ENCODE measurements at regions of chr5 and their contacts with region 1.

Region 1: DNA sequence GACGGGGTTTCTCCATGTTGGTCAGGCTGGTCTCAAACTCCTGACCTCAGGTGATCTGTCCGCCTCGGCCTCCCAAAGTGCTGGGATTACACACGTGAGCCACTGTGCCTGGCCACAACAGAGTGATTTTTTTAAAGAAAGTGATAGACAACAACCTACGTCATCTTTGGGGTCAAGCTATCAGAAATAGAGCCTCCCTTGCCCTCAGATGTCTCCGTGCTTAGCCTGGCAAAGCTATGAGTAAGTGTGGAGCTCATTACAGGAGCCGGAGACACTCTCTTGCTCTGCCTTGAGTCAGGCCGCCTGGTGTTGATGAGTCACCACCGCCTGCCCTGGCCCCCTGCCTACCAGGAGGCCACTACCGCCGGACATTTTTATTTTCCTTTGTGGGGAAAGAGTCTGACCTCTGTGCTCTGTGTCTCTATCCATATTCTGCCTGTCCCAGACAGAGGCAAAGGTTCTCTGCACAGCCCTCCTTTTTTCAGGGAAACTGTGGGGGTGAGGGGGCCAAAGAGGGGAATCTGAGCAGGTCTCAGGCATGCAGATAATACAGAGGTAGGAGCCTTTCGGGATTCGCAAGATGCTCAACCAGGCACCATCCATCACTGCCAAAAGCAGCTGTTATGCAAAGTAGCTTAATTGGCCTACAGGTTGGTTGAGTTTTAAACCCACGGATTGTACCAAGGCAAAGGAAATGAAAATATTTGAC is 123.7 kb upstream of the CPEB4 start:
- DNase-seq: peak; percentile 92
- H3K4me3 ChIP-seq: peak overlapping the region in 1 of 3 experiments; percentile 20
- H3K27ac ChIP-seq: peak overlapping the region; percentile 91
- H3K4me1 ChIP-seq: peaks cover 27% of the 10 kb centered on the region
- H3K27me3 ChIP-seq: no peaks in the 10 kb centered on the region
- CTCF ChIP-seq: no peak
- POLR2A ChIP-seq: no peak

Region 2: GRCh38 chr5:173707392-173707791 is 57.1 kb before region 1 on chr5:
- CTCF ChIA-PET with region 1: no interaction called
- POLR2A ChIA-PET with region 1: no interaction called
- dilution Hi-C with region 1: no loop called
- intact Hi-C with region 1: no loop called
- DNase-seq: no peak
- H3K4me3 ChIP-seq: no peak overlapping the region
- H3K27ac ChIP-seq: no peak overlapping the region
- H3K4me1 ChIP-seq: no peaks in the 10 kb centered on the region
- H3K27me3 ChIP-seq: no peaks in the 10 kb centered on the region
- CTCF ChIP-seq: no peak
- POLR2A ChIP-seq: no peak

Region 3: GRCh38 chr5:173717959-173718358 is 46.5 kb before region 1 on chr5:
- CTCF ChIA-PET with region 1: interaction called, 3 read pairs
- POLR2A ChIA-PET with region 1: no interaction called
- dilution Hi-C with region 1: no loop called
- intact Hi-C with region 1: loop called (anchors 1 kb)
- DNase-seq: peak; percentile 22
- H3K4me3 ChIP-seq: no peak overlapping the region
- H3K27ac ChIP-seq: no peak overlapping the region
- H3K4me1 ChIP-seq: peaks cover 6% of the 10 kb centered on the region
- H3K27me3 ChIP-seq: no peaks in the 10 kb centered on the region
- CTCF ChIP-seq: no peak
- POLR2A ChIP-seq: no peak

Region 4: GRCh38 chr5:173781814-173782670 is 17.6 kb after region 1 on chr5:
- CTCF ChIA-PET with region 1: interaction called, 5 read pairs
- POLR2A ChIA-PET with region 1: interaction called, 4 read pairs
- dilution Hi-C with region 1: no loop called
- intact Hi-C with region 1: loop called (anchors 1 kb)
- DNase-seq: peak; percentile 94
- H3K4me3 ChIP-seq: no peak overlapping the region
- H3K27ac ChIP-seq: peak overlapping the region; percentile 99
- H3K4me1 ChIP-seq: peaks cover 34% of the 10 kb centered on the region
- H3K27me3 ChIP-seq: no peaks in the 10 kb centered on the region
- CTCF ChIP-seq: no peak
- POLR2A ChIP-seq: peak; percentile 42

Region 5: GRCh38 chr5:173887610-173888472 is 123.4 kb after region 1 on chr5 and contains the start of gene CPEB4:
- CTCF ChIA-PET with region 1: interaction called, 3 read pairs
- POLR2A ChIA-PET with region 1: interaction called, 8 read pairs
- dilution Hi-C with region 1: no loop called
- intact Hi-C with region 1: loop called (anchors 1 kb)
- DNase-seq: peak; percentile 99
- H3K4me3 ChIP-seq: peak within 1 kb of the TSS; percentile 76 to 84 (median 79)
- H3K27ac ChIP-seq: peak within 1 kb of the TSS; percentile 82
- H3K4me1 ChIP-seq: peaks cover 42% of the 10 kb centered on the region
- H3K27me3 ChIP-seq: no peaks in the 10 kb centered on the region
- CTCF ChIP-seq: no peak
- POLR2A ChIP-seq: peak; percentile 89
- total RNA-seq, gene CPEB4: 16.4 and 18.1 TPM in 2 replicates

Region 6: GRCh38 chr5:173917788-173918786 is 153.6 kb after region 1 on chr5:
- CTCF ChIA-PET with region 1: interaction called, 4 read pairs
- POLR2A ChIA-PET with region 1: no interaction called
- dilution Hi-C with region 1: no loop called
- intact Hi-C with region 1: loop called (anchors 1 kb)
- DNase-seq: peak; percentile 93
- H3K4me3 ChIP-seq: peak overlapping the region; percentile 44 to 93 (median 65)
- H3K27ac ChIP-seq: peak overlapping the region; percentile 99
- H3K4me1 ChIP-seq: peaks cover 28% of the 10 kb centered on the region
- H3K27me3 ChIP-seq: no peaks in the 10 kb centered on the region
- CTCF ChIP-seq: no peak
- POLR2A ChIP-seq: peak; percentile 94

Region 7: GRCh38 chr5:174311531-174312269 is 547.2 kb after region 1 on chr5:
- CTCF ChIA-PET with region 1: no interaction called
- POLR2A ChIA-PET with region 1: no interaction called
- dilution Hi-C with region 1: no loop called
- intact Hi-C with region 1: loop called (anchors 5 kb)
- DNase-seq: peak; percentile 29
- H3K4me3 ChIP-seq: peak overlapping the region in 1 of 3 experiments; percentile 21
- H3K27ac ChIP-seq: no peak overlapping the region
- H3K4me1 ChIP-seq: no peaks in the 10 kb centered on the region
- H3K27me3 ChIP-seq: no peaks in the 10 kb centered on the region
- CTCF ChIP-seq: peak; percentile 76 to 83
- POLR2A ChIP-seq: no peak